ENCODE measurements at regions of chr4 and their contacts with region 1.

Region 1: DNA sequence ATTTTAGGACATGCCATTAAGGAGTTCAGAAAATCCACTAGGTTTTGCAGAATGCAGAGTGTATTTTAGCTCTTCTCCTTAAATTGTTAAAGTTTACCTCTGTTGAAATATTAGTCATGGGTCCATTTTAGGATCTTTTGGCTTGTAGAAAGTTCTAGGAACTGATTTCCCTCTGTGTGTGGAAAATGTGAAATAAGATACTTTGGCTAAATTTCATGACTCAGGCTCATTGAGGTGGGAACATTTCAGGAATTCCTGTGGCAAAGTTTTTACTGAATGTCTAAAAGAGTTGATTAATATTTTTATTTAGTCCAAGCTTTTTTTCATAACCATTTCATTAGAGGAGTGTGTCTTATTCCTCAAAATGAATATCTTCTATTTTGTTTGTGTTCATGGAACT is 7.0 kb downstream of the FHIP1A start:
- DNase-seq: peak in 1 of 2 experiments; percentile 70
- H3K4me3 ChIP-seq: no peak overlapping the region
- H3K27ac ChIP-seq: peak overlapping the region; percentile 71
- H3K4me1 ChIP-seq: peaks cover 52% of the 10 kb centered on the region
- H3K27me3 ChIP-seq: no peaks in the 10 kb centered on the region
- CTCF ChIP-seq: no peak

Region 2: DNA sequence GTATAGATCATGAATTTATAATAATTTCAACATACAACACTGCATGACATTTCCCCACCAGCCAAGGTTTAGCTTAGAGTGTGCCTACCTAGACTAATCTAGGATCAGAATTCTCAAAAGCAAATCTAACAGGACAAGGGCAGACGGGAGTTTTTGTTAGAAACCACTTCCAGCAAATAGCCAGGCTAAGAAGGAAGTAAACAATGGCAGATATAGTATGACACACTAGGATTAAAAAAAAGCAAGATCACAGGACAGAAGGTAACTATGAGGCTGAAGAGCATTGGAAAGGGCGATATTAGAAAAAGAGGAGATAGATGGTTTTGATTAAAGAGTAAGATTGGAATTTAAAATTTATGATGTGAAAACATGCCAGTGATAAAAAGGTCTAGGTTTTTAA is 525.7 kb before region 1 on chr4:
- CTCF ChIA-PET with region 1: no interaction called
- POLR2A ChIA-PET with region 1: no interaction called
- intact Hi-C with region 1: no loop called
- DNase-seq: no peak
- H3K4me3 ChIP-seq: no peak overlapping the region
- H3K27ac ChIP-seq: no peak overlapping the region
- H3K4me1 ChIP-seq: 0 out of 2 replicates have a peak, but pooled peaks cover 2% of the 10 kb centered on the region
- H3K27me3 ChIP-seq: no peaks in the 10 kb centered on the region
- CTCF ChIP-seq: no peak

Region 3: DNA sequence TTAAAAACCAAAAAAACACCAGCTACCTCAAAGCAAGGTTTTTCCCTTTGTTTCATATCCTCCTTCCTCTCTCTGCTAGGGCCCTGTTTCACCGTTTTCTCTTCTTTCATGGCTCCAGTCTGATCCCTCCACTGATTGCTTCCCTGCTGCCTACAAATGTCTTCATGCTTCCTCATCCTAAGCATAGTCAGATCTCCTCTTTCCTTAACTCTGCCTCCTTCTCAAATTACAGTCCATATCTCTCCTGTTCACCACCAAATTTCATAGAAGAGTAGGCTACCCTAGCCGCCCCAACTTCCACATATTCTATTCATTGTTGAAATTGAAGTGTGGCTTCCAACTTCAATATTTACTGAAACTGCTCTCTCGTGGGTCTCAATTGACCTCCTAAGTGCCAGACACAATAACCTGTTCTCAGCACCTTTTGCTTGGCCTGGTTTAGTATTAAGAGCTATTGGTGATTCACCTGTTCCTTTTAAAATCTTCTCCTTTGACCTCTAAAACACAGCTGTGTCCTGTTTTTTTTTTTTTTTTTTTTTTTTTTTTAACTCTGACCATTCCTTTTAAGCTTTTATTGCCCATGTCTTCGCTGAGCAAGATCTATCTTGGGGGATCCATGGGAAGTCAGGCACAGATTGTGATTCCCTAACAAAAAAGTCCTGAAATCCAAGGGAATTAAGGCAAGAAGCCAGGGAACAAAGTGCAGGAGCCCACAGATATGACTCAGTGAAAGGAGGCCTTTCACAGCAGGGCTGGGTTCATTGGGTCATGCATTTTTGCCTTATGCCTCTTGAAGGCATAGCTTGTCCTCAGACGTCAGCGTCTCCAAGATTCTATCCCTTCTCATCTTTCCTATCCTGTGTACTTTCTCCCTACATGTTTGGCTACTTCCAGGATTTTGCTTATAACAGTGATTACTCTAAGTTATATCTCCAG is 231.2 kb before region 1 on chr4:
- CTCF ChIA-PET with region 1: no interaction called
- POLR2A ChIA-PET with region 1: interaction called, 36 read pairs
- intact Hi-C with region 1: no loop called
- DNase-seq: peak in 1 of 2 experiments; percentile 25
- H3K4me3 ChIP-seq: no peak overlapping the region
- H3K27ac ChIP-seq: peak overlapping the region; percentile 17; the same call in 1 of the 2 replicates
- H3K4me1 ChIP-seq: no peaks in the 10 kb centered on the region; the same call in 1 of the 2 replicates
- H3K27me3 ChIP-seq: no peaks in the 10 kb centered on the region
- CTCF ChIP-seq: no peak

Region 4: GRCh38 chr4:151540728-151541422 is 124.9 kb after region 1 on chr4:
- CTCF ChIA-PET with region 1: no interaction called
- POLR2A ChIA-PET with region 1: interaction called, 31 read pairs
- intact Hi-C with region 1: no loop called
- DNase-seq: peak; percentile 68 to 92
- H3K4me3 ChIP-seq: no peak overlapping the region
- H3K27ac ChIP-seq: peak overlapping the region; percentile 50
- H3K4me1 ChIP-seq: peaks cover 23% of the 10 kb centered on the region
- H3K27me3 ChIP-seq: no peaks in the 10 kb centered on the region
- CTCF ChIP-seq: no peak

Region 5: GRCh38 chr4:151744614-151745013 is 328.6 kb after region 1 on chr4:
- CTCF ChIA-PET with region 1: no interaction called
- POLR2A ChIA-PET with region 1: no interaction called
- intact Hi-C with region 1: no loop called
- DNase-seq: peak; percentile 30 to 90
- H3K4me3 ChIP-seq: no peak overlapping the region
- H3K27ac ChIP-seq: peak overlapping the region; percentile 81
- H3K4me1 ChIP-seq: peaks cover 22% of the 10 kb centered on the region
- H3K27me3 ChIP-seq: no peaks in the 10 kb centered on the region
- CTCF ChIP-seq: no peak

Measured in PC-9 (cell line).